Activated CD8-positive, alpha-beta T cell treated with anti-CD3 and anti-CD28 coated beads for 36 hours (primary cell): ENCODE measurements at regions of chr10 and their contacts with region 1.

Region 1: DNA sequence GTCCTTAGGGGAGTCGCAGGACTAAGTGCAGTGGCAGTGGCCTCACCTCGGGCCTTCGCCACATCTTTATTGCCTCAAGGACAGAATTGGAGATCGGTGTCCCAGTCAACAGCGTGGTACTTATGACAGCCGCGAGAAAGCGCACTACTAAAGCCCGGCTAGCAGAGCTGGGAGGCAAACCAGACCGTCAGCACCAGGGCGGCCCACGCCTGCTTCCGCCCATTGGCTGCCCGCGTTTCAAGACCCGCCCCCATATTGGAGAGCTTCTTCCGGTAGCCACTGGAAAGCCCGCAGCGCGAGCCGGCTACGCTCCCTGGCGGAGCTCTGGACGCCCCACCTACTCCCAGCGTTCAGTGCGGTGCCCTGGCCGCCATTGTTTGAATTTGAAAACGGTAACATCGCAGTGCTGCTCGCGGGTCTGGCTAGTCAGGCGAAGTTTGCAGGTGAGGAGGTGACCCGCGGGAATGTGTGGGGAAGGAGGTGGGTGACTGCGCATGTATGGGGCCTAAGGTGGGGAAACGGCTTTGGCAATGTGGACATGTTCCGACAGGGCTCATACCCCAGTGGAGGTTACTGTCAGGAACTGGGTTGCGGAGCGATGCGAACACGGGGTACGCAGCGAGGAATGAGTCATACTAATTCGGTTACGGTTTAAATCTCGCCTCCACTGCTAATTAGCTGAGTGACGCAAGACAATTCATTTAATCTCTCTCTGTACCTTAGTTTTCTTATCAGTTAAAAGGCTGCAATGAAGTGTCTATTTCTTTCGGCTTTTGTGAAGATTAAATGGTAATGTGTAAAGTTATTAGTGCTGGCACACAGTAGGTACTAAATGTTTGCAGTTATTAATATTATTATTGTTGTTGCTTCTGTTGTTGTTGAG is at the start of gene KIF20B:
- DNase-seq: peak; percentile 97
- ATAC-seq: peak; percentile 97
- H3K4me3 Mint-ChIP-seq: peak within 1 kb of the TSS; percentile 95
- H3K27ac Mint-ChIP-seq: peak within 1 kb of the TSS; percentile 98
- H3K4me1 Mint-ChIP-seq: peaks cover 40% of the 10 kb centered on the region
- H3K27me3 Mint-ChIP-seq: no peaks in the 10 kb centered on the region
- CTCF ChIP-seq: no peak
- total RNA-seq, gene KIF20B: 58.1 to 63.2 TPM

Region 2: DNA sequence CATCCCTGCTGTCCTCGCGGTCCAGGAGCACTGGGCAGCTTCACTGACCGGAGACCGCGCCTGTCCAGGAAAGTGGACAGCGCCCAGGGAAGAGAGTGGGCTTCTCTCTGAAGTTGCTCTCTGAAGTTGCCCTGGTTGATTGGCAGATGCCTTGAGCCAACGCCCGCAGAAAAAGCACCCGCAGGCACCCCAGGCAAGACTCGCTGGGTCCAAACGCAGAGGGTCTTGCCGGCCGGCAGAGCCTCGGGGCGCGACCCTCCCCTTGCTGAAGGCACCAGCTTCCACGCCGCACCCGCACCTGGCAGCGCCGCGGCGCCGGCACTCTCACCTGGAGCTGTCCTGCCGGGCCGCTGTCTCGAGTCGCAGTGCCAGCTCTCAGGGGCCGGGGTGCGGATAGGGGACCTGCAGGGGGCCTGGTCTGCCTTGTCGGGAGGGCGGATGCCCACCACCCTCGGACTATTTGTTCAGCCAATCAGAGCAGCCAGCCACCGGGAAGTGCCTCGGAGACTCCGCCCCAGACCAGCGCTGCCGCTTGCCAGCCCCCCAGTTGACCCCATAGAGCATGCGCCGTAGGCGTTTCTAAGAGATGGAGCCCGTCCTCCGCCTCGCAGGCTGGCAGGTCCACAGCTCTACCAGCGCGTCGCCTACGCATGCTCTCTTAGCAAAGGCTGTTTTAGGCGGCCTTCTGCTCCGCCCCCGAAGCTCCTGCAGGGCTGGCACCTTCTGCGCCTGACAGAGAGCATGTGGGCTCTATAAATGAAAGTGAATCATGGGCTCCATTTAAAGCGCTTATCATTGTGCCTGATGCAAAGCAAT is 449.9 kb before region 1 on chr10 and contains the start of gene LIPA:
- CTCF ChIA-PET with region 1: no interaction called
- POLR2A ChIA-PET with region 1: no interaction called
- intact Hi-C with region 1: loop called (anchors 5 kb)
- DNase-seq: peak; percentile 98
- ATAC-seq: peak; percentile 96
- H3K4me3 Mint-ChIP-seq: peak within 1 kb of the TSS; percentile 88
- H3K27ac Mint-ChIP-seq: peak within 1 kb of the TSS; percentile 76
- H3K4me1 Mint-ChIP-seq: peaks cover 31% of the 10 kb centered on the region
- H3K27me3 Mint-ChIP-seq: peaks cover 3% of the 10 kb centered on the region
- CTCF ChIP-seq: no peak
- total RNA-seq, gene LIPA: 20.4 to 20.7 TPM

Region 3: GRCh38 chr10:89645015-89645741 is 56.3 kb before region 1 on chr10 and contains the start of gene PANK1:
- CTCF ChIA-PET with region 1: no interaction called
- POLR2A ChIA-PET with region 1: interaction called, 6 read pairs
- intact Hi-C with region 1: loop called (anchors 5 kb)
- DNase-seq: peak; percentile 83
- ATAC-seq: peak; percentile 50
- H3K4me3 Mint-ChIP-seq: no peak within 1 kb of the TSS
- H3K27ac Mint-ChIP-seq: peak within 1 kb of the TSS; percentile 55
- H3K4me1 Mint-ChIP-seq: peaks cover 6% of the 10 kb centered on the region
- H3K27me3 Mint-ChIP-seq: peaks cover 20% of the 10 kb centered on the region
- CTCF ChIP-seq: no peak
- total RNA-seq, gene PANK1: 2.3 to 3.9 TPM